Activated T-helper 2 cell treated with anti-CD3 and anti-CD28 coated beads, Interferon-gamma antibody, Interleukin-2, Interleukin-4, amounts not matched to agents 10 μg/mL and 5 μg/mL and 100 μg/mL, durations not matched to agents 14 hours and 24 hours and 36 hours (primary cell): ENCODE measurements at regions of chr1 and their contacts with region 1.

Region 1: DNA sequence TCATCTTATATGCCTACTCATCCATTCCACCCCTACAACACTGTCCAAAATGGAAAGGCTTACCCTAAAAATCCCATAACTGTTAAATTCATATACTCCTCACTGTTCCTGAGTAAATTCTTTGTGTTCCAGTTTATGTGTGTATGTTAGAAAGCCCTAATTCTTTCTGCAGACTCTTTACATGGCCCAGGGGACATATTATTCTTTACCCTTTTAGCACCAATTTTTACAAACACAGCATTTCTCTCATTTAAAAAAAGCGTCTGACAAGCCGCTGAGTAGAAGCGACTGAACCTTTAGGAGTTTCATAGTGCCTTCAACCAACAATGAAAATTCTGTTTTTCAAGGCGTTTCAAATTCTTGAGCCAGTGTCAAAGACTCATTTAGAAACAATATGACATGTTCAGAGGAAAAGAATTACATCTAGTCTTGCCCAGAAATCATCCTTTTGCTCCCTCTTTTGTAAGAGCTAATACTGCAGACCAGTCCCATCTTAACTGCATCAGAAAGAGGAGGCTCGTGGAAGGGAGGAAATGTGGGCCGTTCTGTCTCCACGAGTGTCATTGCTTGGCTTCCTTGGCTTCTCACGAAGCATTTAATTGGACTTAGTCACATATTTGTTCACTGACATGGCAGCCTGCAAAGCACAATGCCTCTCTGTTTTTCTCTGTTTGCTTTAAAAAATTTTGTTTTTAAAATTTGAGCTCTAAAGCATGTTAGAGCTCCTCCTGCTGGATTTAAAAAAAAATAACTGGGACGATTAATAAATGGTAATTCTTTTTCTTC is 21.3 kb upstream of the C1orf105 start:
- DNase-seq: no peak
- H3K4me3 Mint-ChIP-seq: no peak overlapping the region
- H3K27ac Mint-ChIP-seq: peak overlapping the region; percentile 18
- H3K4me1 Mint-ChIP-seq: peaks cover 45% of the 10 kb centered on the region
- H3K27me3 Mint-ChIP-seq: no peaks in the 10 kb centered on the region

Region 2: GRCh38 chr1:172002725-172003345 is 396.3 kb before region 1 on chr1:
- intact Hi-C with region 1: loop called (anchors 2 kb)
- DNase-seq: no peak
- H3K4me3 Mint-ChIP-seq: no peak overlapping the region
- H3K27ac Mint-ChIP-seq: no peak overlapping the region
- H3K4me1 Mint-ChIP-seq: no peaks in the 10 kb centered on the region
- H3K27me3 Mint-ChIP-seq: no peaks in the 10 kb centered on the region

Region 3: GRCh38 chr1:172135076-172135672 is 264.0 kb before region 1 on chr1:
- intact Hi-C with region 1: loop called (anchors 1 kb)
- DNase-seq: no peak
- H3K4me3 Mint-ChIP-seq: no peak overlapping the region
- H3K27ac Mint-ChIP-seq: no peak overlapping the region
- H3K4me1 Mint-ChIP-seq: peaks cover 20% of the 10 kb centered on the region
- H3K27me3 Mint-ChIP-seq: no peaks in the 10 kb centered on the region

Region 4: GRCh38 chr1:172338295-172338735 is 60.8 kb before region 1 on chr1:
- intact Hi-C with region 1: loop called (anchors 2 kb)
- DNase-seq: no peak
- H3K4me3 Mint-ChIP-seq: no peak overlapping the region
- H3K27ac Mint-ChIP-seq: peak overlapping the region; percentile 54
- H3K4me1 Mint-ChIP-seq: peaks cover 44% of the 10 kb centered on the region
- H3K27me3 Mint-ChIP-seq: no peaks in the 10 kb centered on the region

Region 5: GRCh38 chr1:172380441-172381244 is 18.5 kb before region 1 on chr1:
- intact Hi-C with region 1: loop called (anchors 1 kb)
- DNase-seq: no peak
- H3K4me3 Mint-ChIP-seq: peak overlapping the region; percentile 52
- H3K27ac Mint-ChIP-seq: peak overlapping the region; percentile 80
- H3K4me1 Mint-ChIP-seq: peaks cover 26% of the 10 kb centered on the region
- H3K27me3 Mint-ChIP-seq: no peaks in the 10 kb centered on the region